Motor neuron (in vitro differentiated cells): ENCODE measurements at regions of chr4 and their contacts with region 1.

Region 1: DNA sequence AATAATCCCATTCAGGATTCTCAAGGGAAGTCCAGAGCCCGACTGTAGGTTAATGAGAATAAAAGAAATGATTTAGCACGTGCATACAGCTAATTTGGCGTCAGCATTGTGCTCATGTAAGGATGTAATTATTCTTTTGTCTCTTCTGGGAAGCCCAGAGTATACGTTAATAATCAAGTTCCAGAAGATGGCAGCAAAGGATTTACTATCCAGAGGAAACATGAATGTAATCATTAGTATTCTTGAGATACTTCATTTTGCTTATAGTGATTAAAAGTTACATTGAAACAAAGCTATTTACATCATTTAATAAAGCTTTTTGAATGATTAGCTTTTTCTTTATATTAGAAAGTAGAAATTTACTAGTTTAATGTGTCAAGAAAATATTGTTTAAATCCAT is 27.1 kb upstream of the MAP9 start:
- ATAC-seq: peak in 7 of 8 experiments; percentile 27 to 84 (median 72)
- H3K4me3 ChIP-seq: no peak overlapping the region
- H3K27ac ChIP-seq: no peak overlapping the region
- H3K4me1 ChIP-seq: peaks cover 2 to 9% of the 10 kb centered on the region in 2 donors

Region 2: GRCh38 chr4:155787113-155787710 is 383.3 kb after region 1 on chr4:
- in situ Hi-C with region 1: loop called in 2 of 9 experiments (anchors 25 kb)
- ATAC-seq: peak in 5 of 8 experiments; percentile 49 to 95 (median 87)
- H3K4me3 ChIP-seq: no peak overlapping the region
- H3K27ac ChIP-seq: no peak overlapping the region
- H3K4me1 ChIP-seq: peaks cover 0 to 13% of the 10 kb centered on the region in 2 donors

Region 3: GRCh38 chr4:155946486-155946885 is 542.6 kb after region 1 on chr4:
- in situ Hi-C with region 1: loop called in 2 of 9 experiments (anchors 25 kb)
- ATAC-seq: no peak
- H3K4me3 ChIP-seq: no peak overlapping the region
- H3K27ac ChIP-seq: no peak overlapping the region
- H3K4me1 ChIP-seq: peaks cover 0 to 9% of the 10 kb centered on the region in 2 donors

Region 4: DNA sequence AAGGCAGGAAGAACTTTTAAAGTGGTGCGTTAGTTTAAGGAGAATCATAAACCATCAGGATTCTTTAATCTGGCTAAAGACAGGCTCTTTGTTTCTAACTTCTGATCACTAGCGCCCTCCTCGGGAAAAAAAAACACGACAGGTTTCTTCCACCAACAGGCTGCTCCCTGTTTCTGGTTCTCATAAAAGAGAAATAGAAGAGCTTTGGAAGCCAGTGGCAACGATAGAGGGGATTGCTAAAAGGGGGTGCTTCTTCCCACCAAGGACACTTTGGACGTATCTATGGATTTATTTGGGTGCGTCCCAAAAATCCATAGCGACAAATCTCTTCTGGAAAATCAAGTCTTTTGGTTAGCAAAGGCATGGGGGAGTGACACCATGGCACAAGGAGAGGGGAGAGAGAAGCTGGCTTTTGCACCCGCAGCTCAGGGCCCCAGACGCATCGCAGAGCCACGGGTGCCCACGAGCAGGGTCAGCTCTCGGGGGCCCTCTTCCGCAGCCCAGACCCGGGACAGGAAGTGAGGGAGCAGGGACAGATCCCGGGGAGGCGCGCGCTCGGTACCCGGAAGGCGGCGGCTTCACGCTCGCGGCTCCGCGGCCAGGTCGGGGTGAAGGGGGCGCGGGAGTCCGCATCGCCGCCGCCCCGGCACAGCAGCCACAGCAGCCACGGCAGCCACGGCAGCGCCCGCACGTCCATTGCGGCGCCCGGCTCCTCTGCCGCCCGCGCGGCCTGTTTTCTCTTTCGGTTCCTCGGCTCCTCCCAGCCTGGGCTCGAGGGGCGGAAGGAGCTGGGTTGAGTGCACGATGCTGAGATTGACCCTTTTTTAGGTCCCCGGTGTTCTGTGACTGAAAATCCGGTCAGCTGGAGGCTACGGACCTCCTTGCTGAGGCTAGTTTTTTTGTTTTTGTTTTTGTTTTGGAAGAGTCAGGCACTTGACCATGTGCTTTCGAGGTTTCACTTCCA is 549.5 kb after region 1 on chr4 and contains the start of gene CTSO:
- in situ Hi-C with region 1: loop called in 2 of 9 experiments (anchors 25 kb)
- ATAC-seq: peak; percentile 94 to 99 (median 97)
- H3K4me3 ChIP-seq: peak within 1 kb of the TSS; percentile 39 to 49 (median 47)
- H3K27ac ChIP-seq: peak within 1 kb of the TSS; percentile 59 to 84
- H3K4me1 ChIP-seq: no peaks in the 10 kb centered on the region
- total RNA-seq, gene CTSO: 0.76 to 23.2 (median 6.1) TPM